AG04450 (cell line): ENCODE measurements at regions of chr19 and their contacts with region 1.

Region 1: GRCh38 chr19:28710278-28710677 is 502.7 kb downstream of the UQCRFS1 start:
- DNase-seq: peak; percentile 20
- H3K4me3 ChIP-seq: no peak overlapping the region
- H3K27ac ChIP-seq: no peak overlapping the region
- H3K27me3 ChIP-seq: no peaks in the 10 kb centered on the region
- CTCF ChIP-seq: peak; percentile 59

Region 2: GRCh38 chr19:27966390-27966816 is 743.9 kb before region 1 on chr19:
- CTCF ChIA-PET with region 1: interaction called, 17 read pairs
- POLR2A ChIA-PET with region 1: no interaction called
- DNase-seq: no peak
- H3K4me3 ChIP-seq: no peak overlapping the region
- H3K27ac ChIP-seq: no peak overlapping the region
- H3K27me3 ChIP-seq: no peaks in the 10 kb centered on the region
- CTCF ChIP-seq: peak; percentile 54

Region 3: DNA sequence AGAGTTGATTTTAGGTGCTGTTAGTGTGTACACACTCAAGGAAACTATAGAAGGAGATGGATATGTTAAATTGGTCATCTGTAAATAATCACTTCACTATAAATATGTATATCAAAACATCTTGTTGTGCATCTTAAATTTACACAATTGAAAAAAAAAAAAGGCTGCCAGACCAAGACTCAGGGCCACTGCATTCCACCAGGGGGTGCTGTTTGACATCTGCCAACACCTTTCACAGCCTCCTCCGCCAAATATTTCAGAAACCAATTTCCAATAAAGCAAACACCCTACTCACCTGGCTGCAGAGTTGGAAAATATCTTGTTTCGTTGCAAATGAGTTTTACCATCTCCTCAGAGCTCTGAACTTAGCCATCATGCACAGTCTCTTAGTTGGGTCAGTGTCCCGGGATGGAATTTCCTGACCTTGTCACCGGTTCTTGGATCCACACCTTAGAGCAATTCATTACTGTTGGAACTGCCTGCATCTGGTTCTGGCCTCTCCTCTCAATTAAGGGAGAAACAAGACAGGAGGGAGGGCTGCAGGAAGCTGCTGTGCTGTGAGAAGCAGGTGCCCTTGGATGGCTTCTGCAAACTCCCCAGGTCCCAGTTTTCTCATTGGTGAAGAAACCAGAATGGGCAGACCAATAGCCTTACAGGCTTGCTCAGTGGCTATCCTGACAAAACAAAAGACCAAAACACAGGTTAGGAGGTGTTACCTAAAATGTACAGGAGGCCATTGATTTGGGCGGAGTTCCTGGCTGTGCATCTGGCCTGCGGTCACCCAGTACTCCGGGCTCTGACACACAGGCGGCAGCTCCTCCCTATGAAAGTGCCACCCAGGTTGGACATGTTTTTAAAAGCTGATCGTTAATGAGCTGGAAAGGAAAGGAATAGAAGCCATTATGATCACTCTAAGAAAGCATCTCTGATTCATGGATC is 243.9 kb before region 1 on chr19:
- CTCF ChIA-PET with region 1: interaction called, 19 read pairs
- POLR2A ChIA-PET with region 1: no interaction called
- DNase-seq: no peak
- H3K4me3 ChIP-seq: no peak overlapping the region
- H3K27ac ChIP-seq: no peak overlapping the region
- H3K27me3 ChIP-seq: no peaks in the 10 kb centered on the region
- CTCF ChIP-seq: peak; percentile 56